CD8-positive, alpha-beta T cell (primary cell): ENCODE measurements at regions of chr13 and their contacts with region 1.

Region 1: DNA sequence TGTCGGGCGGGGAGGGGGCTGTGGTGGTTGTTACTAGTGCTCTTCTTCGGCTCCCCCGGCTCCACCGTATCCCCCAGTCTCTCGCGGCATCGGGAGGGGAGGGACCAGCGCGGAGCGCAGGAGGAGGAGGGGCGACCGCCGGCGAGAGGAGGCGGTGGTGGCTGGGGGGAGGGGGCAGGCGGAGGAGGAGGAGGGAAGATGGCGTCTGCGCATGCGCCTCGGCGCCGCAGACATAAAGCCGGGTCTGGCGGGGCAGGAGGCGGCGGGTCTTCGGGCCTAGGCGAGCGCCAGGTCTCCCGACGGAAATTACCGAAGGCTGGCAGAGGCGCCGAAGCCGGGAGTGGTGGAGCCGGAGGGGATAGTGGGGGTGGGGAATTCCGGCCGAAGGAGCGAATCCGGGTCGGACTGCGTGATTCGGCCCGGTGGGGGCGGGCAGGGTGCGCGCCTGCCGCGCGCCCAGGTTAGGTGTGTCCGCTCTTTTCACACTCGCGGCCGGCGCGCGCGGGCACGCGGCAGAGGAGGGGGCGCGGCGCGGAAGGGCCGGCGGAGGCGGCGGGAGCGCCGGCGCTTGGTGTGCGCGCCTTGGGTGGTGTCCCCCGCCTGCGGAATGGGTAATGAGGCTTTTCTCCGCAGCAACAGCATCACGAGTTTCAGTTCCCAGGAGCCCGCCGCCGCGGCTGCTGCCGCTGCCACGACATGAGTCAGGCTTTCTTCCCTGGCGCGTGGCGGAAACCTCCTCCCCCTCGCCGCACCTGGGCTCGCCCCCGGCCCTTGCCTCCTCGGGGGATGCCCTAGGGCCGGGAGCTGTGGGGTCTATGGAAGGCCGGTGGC is 1.3 kb upstream of the TSC22D1 start:
- DNase-seq: peak; percentile 92 to 98 (median 96)
- ATAC-seq: peak; percentile 76
- H3K4me3 ChIP-seq: peak overlapping the region; percentile 78 to 87
- H3K4me3 Mint-ChIP-seq: peak overlapping the region; percentile 95
- H3K27ac ChIP-seq: peak overlapping the region; percentile 78 to 92
- H3K27ac Mint-ChIP-seq: peak overlapping the region; percentile 95
- H3K4me1 ChIP-seq: peaks cover 35% of the 10 kb centered on the region
- H3K4me1 Mint-ChIP-seq: peaks cover 36% of the 10 kb centered on the region
- H3K27me3 ChIP-seq: no peaks in the 10 kb centered on the region
- H3K27me3 Mint-ChIP-seq: no peaks in the 10 kb centered on the region
- CTCF ChIP-seq: no peak

Region 2: GRCh38 chr13:43878892-43879754 is 698.3 kb before region 1 on chr13 and contains the start of gene CCDC122:
- CTCF ChIA-PET with region 1: no interaction called
- POLR2A ChIA-PET with region 1: no interaction called
- intact Hi-C with region 1: loop called in 1 of 2 experiments (anchors 5 kb)
- DNase-seq: peak; percentile 37 to 89 (median 69)
- ATAC-seq: peak; percentile 78
- H3K4me3 ChIP-seq: peak within 1 kb of the TSS; percentile 56 to 66
- H3K4me3 Mint-ChIP-seq: peak within 1 kb of the TSS; percentile 90
- H3K27ac ChIP-seq: peak within 1 kb of the TSS in 1 of 2 experiments; percentile 61
- H3K27ac Mint-ChIP-seq: peak within 1 kb of the TSS; percentile 84
- H3K4me1 ChIP-seq: peaks cover 10% of the 10 kb centered on the region
- H3K4me1 Mint-ChIP-seq: peaks cover 14% of the 10 kb centered on the region
- H3K27me3 ChIP-seq: no peaks in the 10 kb centered on the region
- H3K27me3 Mint-ChIP-seq: peaks cover 11% of the 10 kb centered on the region
- CTCF ChIP-seq: no peak
- total RNA-seq, gene CCDC122: not detected

Region 3: GRCh38 chr13:44274452-44275205 is 302.8 kb before region 1 on chr13:
- CTCF ChIA-PET with region 1: no interaction called
- POLR2A ChIA-PET with region 1: no interaction called
- intact Hi-C with region 1: loop called (anchors 5 kb)
- DNase-seq: peak in 8 of 9 experiments; percentile 17 to 91 (median 37)
- ATAC-seq: peak; percentile 92
- H3K4me3 ChIP-seq: peak overlapping the region; percentile 34 to 41
- H3K4me3 Mint-ChIP-seq: peak overlapping the region; percentile 73
- H3K27ac ChIP-seq: peak overlapping the region; percentile 81 to 96
- H3K27ac Mint-ChIP-seq: peak overlapping the region; percentile 98
- H3K4me1 ChIP-seq: peaks cover 35% of the 10 kb centered on the region
- H3K4me1 Mint-ChIP-seq: peaks cover 51% of the 10 kb centered on the region
- H3K27me3 ChIP-seq: no peaks in the 10 kb centered on the region
- H3K27me3 Mint-ChIP-seq: no peaks in the 10 kb centered on the region
- CTCF ChIP-seq: no peak

Region 4: GRCh38 chr13:44470638-44471562 is 106.6 kb before region 1 on chr13:
- CTCF ChIA-PET with region 1: no interaction called
- POLR2A ChIA-PET with region 1: no interaction called
- intact Hi-C with region 1: no loop called
- DNase-seq: peak in 2 of 9 experiments; percentile 41 to 53
- ATAC-seq: no peak
- H3K4me3 ChIP-seq: no peak overlapping the region
- H3K4me3 Mint-ChIP-seq: no peak overlapping the region
- H3K27ac ChIP-seq: no peak overlapping the region
- H3K27ac Mint-ChIP-seq: no peak overlapping the region
- H3K4me1 ChIP-seq: no peaks in the 10 kb centered on the region
- H3K4me1 Mint-ChIP-seq: peaks cover 3% of the 10 kb centered on the region
- H3K27me3 ChIP-seq: no peaks in the 10 kb centered on the region
- H3K27me3 Mint-ChIP-seq: no peaks in the 10 kb centered on the region
- CTCF ChIP-seq: peak; percentile 47

Region 5: GRCh38 chr13:44537248-44537647 is 40.2 kb before region 1 on chr13:
- CTCF ChIA-PET with region 1: no interaction called
- POLR2A ChIA-PET with region 1: no interaction called
- intact Hi-C with region 1: loop called in 1 of 2 experiments (anchors 5 kb)
- DNase-seq: peak in 1 of 9 experiments; percentile 14
- ATAC-seq: no peak
- H3K4me3 ChIP-seq: no peak overlapping the region
- H3K4me3 Mint-ChIP-seq: no peak overlapping the region
- H3K27ac ChIP-seq: no peak overlapping the region
- H3K27ac Mint-ChIP-seq: no peak overlapping the region
- H3K4me1 ChIP-seq: peaks cover 9% of the 10 kb centered on the region
- H3K4me1 Mint-ChIP-seq: peaks cover 12% of the 10 kb centered on the region
- H3K27me3 ChIP-seq: no peaks in the 10 kb centered on the region
- H3K27me3 Mint-ChIP-seq: no peaks in the 10 kb centered on the region
- CTCF ChIP-seq: no peak

Region 6: DNA sequence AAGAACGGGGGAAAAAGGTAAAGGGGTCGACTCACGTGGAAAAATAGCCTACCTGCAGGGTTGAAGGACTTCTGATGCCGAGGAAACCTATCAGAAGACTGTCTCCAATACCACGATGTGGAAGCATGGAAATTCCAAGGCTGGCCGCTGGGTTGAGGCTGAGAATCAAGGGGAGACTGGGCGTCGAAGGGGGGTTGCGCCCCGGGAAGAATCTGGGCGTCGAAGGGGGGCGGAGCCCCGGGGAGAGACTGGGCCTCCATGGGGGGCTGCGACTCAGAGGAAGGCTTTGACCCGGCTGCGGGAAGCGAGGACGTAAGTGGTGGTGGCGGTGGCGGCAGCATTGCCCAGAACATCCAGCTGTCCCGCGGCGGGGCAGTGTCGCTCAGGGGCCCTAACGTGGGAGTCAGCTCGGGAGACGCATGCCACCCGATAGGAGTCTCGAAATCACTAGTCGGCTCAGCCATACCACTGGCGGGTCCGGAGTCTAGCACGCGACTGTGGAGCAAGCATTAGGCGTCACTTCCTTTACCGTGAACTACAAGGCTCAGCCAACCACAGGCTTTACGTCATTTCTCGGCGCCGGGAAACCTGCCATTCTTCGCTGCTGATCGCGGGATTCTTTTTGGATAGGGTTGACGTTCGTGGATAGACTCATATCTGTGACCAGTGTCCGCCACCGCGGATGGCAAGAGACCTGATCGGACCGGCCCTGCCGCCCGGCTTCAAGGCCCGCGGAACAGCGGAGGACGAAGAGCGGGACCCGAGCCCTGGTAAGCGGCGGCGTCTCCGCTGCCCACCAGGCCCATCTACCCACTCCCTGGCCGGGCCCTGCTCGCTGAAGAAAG is 411.7 kb after region 1 on chr13 and contains the starts of genes GPALPP1 and NUFIP1:
- CTCF ChIA-PET with region 1: no interaction called
- POLR2A ChIA-PET with region 1: no interaction called
- intact Hi-C with region 1: loop called (anchors 1 to 5 kb)
- DNase-seq: peak; percentile 79 to 96 (median 93)
- ATAC-seq: peak; percentile 94
- H3K4me3 ChIP-seq: peak within 1 kb of the TSS; percentile 88 to 92
- H3K4me3 Mint-ChIP-seq: peak within 1 kb of the TSS; percentile 100
- H3K27ac ChIP-seq: peak within 1 kb of the TSS; percentile 86 to 90
- H3K27ac Mint-ChIP-seq: peak within 1 kb of the TSS; percentile 99
- H3K4me1 ChIP-seq: peaks cover 20% of the 10 kb centered on the region
- H3K4me1 Mint-ChIP-seq: peaks cover 64% of the 10 kb centered on the region
- H3K27me3 ChIP-seq: no peaks in the 10 kb centered on the region
- H3K27me3 Mint-ChIP-seq: no peaks in the 10 kb centered on the region
- CTCF ChIP-seq: no peak
- total RNA-seq, gene GPALPP1: 16.7 to 17.8 TPM
- total RNA-seq, gene NUFIP1: 5.2 to 6.1 TPM

Region 7: DNA sequence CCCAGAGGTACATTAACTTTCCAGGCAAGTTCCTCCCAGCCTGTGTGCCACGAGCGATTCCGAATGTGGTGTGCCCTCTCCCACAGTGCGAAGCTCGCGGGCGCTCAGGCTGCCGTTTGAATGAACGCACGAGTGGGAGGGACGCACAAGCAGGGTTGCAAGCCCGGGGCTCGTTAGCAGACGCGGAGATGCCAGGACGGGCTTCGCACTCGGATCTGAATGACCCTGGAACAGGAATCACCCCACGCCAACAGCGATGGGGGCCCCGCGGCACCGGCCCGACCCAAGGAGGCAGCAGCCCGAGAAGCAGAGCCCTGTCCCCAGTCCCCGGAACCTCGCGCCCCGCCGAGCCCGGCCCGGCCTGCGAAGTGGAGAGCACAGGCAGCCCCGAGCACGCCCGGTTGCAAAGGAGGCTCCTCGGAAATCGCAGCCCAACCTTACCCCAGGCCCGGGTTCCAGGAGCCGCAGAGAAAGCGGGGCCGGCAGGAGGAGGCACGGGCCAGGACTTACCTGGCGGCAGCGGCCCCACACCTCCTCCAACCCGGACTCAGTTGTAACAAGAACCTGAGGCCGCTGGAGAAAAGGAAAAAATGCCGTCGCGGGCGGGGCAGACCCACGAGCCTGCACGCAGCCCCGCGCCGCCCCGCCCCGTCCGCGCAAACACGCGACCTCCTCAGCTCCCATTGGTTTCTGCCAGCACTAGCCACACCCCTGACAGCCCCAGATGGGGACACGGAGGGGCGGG is 840.5 kb after region 1 on chr13 and contains the start of gene SLC25A30:
- CTCF ChIA-PET with region 1: no interaction called
- POLR2A ChIA-PET with region 1: no interaction called
- intact Hi-C with region 1: loop called in 1 of 2 experiments (anchors 5 kb)
- DNase-seq: peak; percentile 83 to 96 (median 91)
- ATAC-seq: peak; percentile 90
- H3K4me3 ChIP-seq: peak within 1 kb of the TSS; percentile 88 to 97
- H3K4me3 Mint-ChIP-seq: peak within 1 kb of the TSS; percentile 94
- H3K27ac ChIP-seq: peak within 1 kb of the TSS; percentile 81 to 85
- H3K27ac Mint-ChIP-seq: peak within 1 kb of the TSS; percentile 96
- H3K4me1 ChIP-seq: peaks cover 24% of the 10 kb centered on the region
- H3K4me1 Mint-ChIP-seq: peaks cover 32% of the 10 kb centered on the region
- H3K27me3 ChIP-seq: no peaks in the 10 kb centered on the region
- H3K27me3 Mint-ChIP-seq: no peaks in the 10 kb centered on the region
- CTCF ChIP-seq: no peak
- total RNA-seq, gene SLC25A30: 37.7 to 40.5 TPM